ENCODE measurements at regions of chr17 and their contacts with region 1.

Region 1: GRCh38 chr17:60392042-60392844 is at the start of gene USP32:
- DNase-seq: peak; percentile 99
- H3K4me3 Mint-ChIP-seq: peak within 1 kb of the TSS; percentile 89
- H3K27ac Mint-ChIP-seq: peak within 1 kb of the TSS; percentile 96
- H3K4me1 Mint-ChIP-seq: peaks cover 44% of the 10 kb centered on the region
- H3K27me3 Mint-ChIP-seq: no peaks in the 10 kb centered on the region
- total RNA-seq, gene USP32: 27.6 to 28.9 TPM

Region 2: GRCh38 chr17:59786536-59787319 is 605.5 kb before region 1 on chr17:
- CTCF ChIA-PET with region 1: no interaction called
- intact Hi-C with region 1: loop called (anchors 10 kb)
- DNase-seq: peak; percentile 93
- H3K4me3 Mint-ChIP-seq: peak overlapping the region; percentile 64
- H3K27ac Mint-ChIP-seq: peak overlapping the region; percentile 100
- H3K4me1 Mint-ChIP-seq: peaks cover 60% of the 10 kb centered on the region
- H3K27me3 Mint-ChIP-seq: no peaks in the 10 kb centered on the region

Region 3: GRCh38 chr17:60077672-60078519 is 314.3 kb before region 1 on chr17:
- CTCF ChIA-PET with region 1: no interaction called
- intact Hi-C with region 1: loop called (anchors 2 kb)
- DNase-seq: peak; percentile 49
- H3K4me3 Mint-ChIP-seq: peak overlapping the region; percentile 85
- H3K27ac Mint-ChIP-seq: peak overlapping the region; percentile 82
- H3K4me1 Mint-ChIP-seq: peaks cover 20% of the 10 kb centered on the region
- H3K27me3 Mint-ChIP-seq: peaks cover 2% of the 10 kb centered on the region

Region 4: DNA sequence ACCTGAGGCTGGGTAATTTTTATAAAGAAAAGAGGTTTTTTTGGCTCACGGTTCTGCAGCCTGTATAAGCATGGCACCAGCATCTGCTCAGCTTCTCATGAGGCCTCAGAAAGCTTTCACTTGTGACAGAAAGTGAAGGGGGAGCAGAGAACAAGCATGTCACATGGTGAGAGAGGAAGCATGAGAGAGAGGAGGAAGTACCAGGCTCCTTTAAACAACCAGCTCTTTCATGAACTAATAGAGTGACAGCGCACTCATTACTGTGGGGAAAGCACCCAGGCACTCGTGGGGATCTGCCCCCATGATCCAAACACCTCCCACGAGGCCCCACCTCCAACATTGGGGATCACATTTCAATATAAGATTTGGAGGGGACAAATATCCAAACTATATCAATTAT is 87.1 kb before region 1 on chr17:
- CTCF ChIA-PET with region 1: no interaction called
- intact Hi-C with region 1: loop called (anchors 1 kb)
- DNase-seq: peak; percentile 53
- H3K4me3 Mint-ChIP-seq: peak overlapping the region; percentile 17
- H3K27ac Mint-ChIP-seq: peak overlapping the region; percentile 1
- H3K4me1 Mint-ChIP-seq: peaks cover 24% of the 10 kb centered on the region
- H3K27me3 Mint-ChIP-seq: no peaks in the 10 kb centered on the region

Region 5: DNA sequence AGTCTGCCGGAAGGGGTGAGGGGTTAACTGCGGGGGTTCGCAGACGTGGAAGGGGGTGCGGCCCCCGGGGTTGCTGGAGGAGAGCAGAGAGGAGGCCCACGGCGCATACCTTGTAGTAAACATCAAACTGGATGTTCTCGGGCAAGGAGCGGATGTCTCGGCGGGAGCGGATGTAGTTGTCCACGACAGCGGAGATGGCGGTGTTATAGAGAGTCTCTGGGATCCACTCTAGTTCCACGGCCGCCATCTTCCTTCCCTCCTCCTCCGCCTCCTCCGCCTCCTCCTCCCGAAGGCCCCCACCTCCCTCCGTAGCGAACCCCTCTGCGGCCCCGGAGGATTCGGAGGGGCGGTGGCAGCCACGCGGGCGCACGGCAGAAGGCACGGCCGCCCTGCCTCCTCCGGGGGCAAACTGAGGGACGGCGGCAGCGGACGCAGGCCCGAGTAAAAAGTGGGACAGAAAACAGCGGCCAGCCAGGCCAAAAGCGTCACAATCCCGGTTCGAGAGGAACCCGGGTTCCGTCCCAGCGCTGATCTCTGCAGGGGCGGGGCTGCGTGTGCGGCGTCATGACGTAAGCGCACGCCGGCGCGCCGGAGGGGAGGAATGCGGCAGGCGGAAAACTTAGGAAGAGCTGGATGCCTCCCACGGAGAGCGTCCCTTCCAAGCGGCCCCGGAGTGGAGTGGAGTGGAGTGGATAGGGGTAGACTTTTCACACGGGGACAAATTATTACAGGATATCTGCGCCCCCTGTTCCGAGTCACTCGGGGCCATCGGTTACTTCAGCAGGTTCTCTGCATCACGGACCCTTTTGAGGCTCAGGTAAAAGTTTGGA is 133.7 kb after region 1 on chr17 and contains the start of gene APPBP2:
- CTCF ChIA-PET with region 1: no interaction called
- intact Hi-C with region 1: loop called (anchors 2 kb)
- DNase-seq: peak; percentile 81
- H3K4me3 Mint-ChIP-seq: peak within 1 kb of the TSS; percentile 96
- H3K27ac Mint-ChIP-seq: peak within 1 kb of the TSS; percentile 93
- H3K4me1 Mint-ChIP-seq: peaks cover 27% of the 10 kb centered on the region
- H3K27me3 Mint-ChIP-seq: no peaks in the 10 kb centered on the region
- total RNA-seq, gene APPBP2: 16.5 to 22.3 TPM

Region 6: GRCh38 chr17:60677308-60678124 is 285.3 kb after region 1 on chr17 and contains the start of gene BCAS3:
- CTCF ChIA-PET with region 1: no interaction called
- intact Hi-C with region 1: loop called (anchors 1 kb)
- DNase-seq: peak; percentile 99
- H3K4me3 Mint-ChIP-seq: peak within 1 kb of the TSS; percentile 91
- H3K27ac Mint-ChIP-seq: peak within 1 kb of the TSS; percentile 79
- H3K4me1 Mint-ChIP-seq: peaks cover 11% of the 10 kb centered on the region
- H3K27me3 Mint-ChIP-seq: no peaks in the 10 kb centered on the region
- total RNA-seq, gene BCAS3: 7.2 to 7.5 TPM

Measured in activated naive CD4-positive, alpha-beta T cell treated with anti-CD3 and anti-CD28 coated beads for 36 hours (primary cell).